ENCODE measurements at regions of chr19 and their contacts with region 1.

Region 1: GRCh38 chr19:11090054-11090900 is 1.0 kb downstream of the LDLR start:
- DNase-seq: peak; percentile 97
- H3K4me3 Mint-ChIP-seq: peak overlapping the region; percentile 98
- H3K27ac Mint-ChIP-seq: peak overlapping the region; percentile 99
- H3K4me1 Mint-ChIP-seq: peaks cover 45% of the 10 kb centered on the region
- H3K27me3 Mint-ChIP-seq: no peaks in the 10 kb centered on the region

Region 2: DNA sequence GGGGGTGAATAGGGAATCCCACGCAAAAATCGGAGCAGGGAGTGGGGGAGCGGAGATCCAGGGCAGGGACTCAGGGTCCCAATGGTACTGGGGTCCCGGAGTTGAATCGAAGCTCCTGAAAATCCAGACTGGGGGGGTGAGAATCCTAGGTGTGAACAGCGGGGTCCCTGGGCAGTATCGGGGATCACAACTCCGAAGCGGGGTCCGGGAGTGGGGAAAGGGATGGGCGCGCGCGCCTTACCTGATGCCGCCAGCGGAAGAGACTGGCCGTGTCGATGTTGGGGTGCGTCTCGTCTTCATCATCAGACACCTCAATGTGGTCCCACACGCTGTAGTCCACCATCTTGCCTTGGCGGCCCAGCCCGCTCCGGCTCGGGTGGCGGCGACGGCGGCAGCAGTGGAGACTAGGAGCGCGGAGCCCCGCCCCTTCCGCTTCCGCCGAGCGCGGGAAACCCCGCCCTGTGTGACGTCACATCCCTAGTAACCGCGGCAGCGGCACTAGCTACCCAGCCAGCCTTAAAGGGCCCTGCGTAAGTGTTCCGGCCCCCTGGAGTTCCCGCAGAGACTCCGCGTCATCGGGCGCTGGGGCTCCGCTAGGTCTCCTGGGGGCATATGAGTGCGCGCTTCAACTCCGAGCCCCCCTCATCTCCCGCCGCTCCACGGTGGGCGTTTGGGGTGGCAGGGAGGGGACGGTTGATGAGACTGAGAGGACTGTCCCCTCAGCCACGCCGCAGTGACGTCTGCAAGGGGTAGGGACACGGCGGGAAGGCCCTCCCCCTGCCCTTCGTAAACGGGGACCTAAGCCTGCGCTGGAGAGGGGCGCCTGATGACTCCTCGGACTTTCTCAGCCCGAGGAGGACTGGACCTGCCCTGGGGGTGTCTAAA is 686.9 kb before region 1 on chr19 and contains the start of gene CDC37:
- intact Hi-C with region 1: loop called (anchors 10 kb)
- DNase-seq: peak; percentile 98
- H3K4me3 Mint-ChIP-seq: peak within 1 kb of the TSS; percentile 94
- H3K27ac Mint-ChIP-seq: peak within 1 kb of the TSS; percentile 96
- H3K4me1 Mint-ChIP-seq: peaks cover 51% of the 10 kb centered on the region
- H3K27me3 Mint-ChIP-seq: no peaks in the 10 kb centered on the region
- total RNA-seq, gene CDC37: 320 and 326 TPM in 2 replicates

Region 3: GRCh38 chr19:10797541-10798256 is 292.6 kb before region 1 on chr19:
- intact Hi-C with region 1: loop called (anchors 1 kb)
- DNase-seq: peak; percentile 92
- H3K4me3 Mint-ChIP-seq: peak overlapping the region; percentile 89
- H3K27ac Mint-ChIP-seq: peak overlapping the region; percentile 99
- H3K4me1 Mint-ChIP-seq: peaks cover 58% of the 10 kb centered on the region
- H3K27me3 Mint-ChIP-seq: no peaks in the 10 kb centered on the region

Region 4: DNA sequence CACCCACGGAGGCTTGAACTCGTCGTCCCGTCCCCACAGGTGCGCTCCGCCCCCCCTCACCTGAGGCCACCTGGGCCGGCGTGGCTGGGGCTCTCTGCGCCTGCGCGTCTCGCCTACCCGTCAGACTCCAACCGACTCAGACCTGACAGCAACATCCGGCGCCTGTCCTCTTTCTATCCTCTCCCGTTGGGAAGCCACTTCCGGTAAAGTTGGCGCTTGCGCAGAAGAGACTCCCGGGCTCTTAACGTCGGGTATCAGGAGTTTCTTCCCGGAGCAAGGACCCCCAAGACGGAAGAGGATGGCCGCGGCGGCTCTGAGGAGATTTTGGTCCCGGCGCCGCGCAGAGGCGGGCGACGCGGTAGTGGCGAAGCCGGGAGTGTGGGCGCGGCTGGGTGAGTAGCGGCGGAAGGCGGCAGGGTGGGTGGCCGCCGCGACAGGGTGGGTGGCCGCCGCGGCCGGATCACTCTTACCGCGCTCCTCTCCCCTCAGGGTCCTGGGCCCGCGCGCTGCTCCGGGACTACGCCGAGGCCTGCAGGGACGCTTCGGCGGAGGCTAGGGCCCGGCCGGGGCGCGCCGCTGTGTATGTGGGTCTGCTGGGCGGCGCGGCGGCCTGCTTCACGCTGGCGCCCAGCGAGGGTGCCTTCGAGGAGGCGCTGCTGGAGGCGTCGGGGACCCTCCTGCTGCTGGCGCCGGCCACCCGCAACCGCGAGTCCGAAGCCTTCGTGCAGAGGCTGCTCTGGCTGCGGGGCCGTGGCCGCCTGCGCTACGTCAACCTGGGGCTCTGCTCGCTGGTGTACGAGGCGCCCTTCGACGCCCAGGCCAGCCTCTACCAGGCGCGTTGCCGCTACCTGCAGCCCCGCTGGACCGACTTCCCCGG is 161.5 kb before region 1 on chr19 and contains the starts of genes TIMM29 and YIPF2:
- intact Hi-C with region 1: loop called (anchors 2 kb)
- DNase-seq: peak; percentile 92
- H3K4me3 Mint-ChIP-seq: peak within 1 kb of the TSS; percentile 94
- H3K27ac Mint-ChIP-seq: peak within 1 kb of the TSS; percentile 85
- H3K4me1 Mint-ChIP-seq: peaks cover 11% of the 10 kb centered on the region
- H3K27me3 Mint-ChIP-seq: no peaks in the 10 kb centered on the region
- total RNA-seq, gene TIMM29: 22.6 and 22.7 TPM in 2 replicates
- total RNA-seq, gene YIPF2: 28.8 and 29.5 TPM in 2 replicates

Region 5: DNA sequence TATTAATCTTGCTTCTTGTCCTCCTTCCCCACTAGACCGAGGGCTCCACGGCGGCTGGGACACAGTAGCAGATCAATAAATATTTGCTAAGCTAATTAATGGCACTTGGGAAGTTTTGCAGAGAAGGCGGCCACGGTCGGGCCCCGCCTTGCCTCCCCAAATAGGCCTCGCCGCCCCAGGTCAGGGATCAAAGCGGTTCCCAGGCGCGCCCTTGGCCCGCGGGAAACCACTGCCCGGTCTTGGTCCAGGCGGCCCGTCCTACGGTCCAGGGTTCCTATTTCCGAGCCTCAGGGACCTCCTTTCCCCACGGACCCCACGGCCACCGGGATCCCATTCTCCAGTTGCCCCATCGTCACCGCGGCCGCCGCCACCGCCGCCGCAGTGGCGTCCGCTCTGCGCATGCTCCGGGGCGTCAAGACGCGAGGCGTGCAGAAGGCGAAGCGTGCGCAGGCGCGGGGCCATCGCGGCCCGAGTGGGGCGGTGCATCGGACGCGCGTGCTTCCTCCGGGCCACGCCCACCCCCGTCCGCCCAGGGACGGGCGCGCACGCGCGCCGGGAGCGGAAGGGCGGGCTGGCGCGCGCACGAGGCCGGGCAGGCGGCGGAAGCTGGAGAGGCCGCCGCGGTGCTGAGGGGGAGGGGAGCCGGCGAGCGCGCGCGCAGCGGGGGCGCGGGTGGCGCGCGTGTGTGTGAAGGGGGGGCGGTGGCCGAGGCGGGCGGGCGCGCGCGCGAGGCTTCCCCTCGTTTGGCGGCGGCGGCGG is 129.8 kb before region 1 on chr19 and contains the start of gene SMARCA4:
- intact Hi-C with region 1: loop called (anchors 2 kb)
- DNase-seq: peak; percentile 99
- H3K4me3 Mint-ChIP-seq: peak within 1 kb of the TSS; percentile 89
- H3K27ac Mint-ChIP-seq: peak within 1 kb of the TSS; percentile 87
- H3K4me1 Mint-ChIP-seq: peaks cover 39% of the 10 kb centered on the region
- H3K27me3 Mint-ChIP-seq: peaks cover under 1% of the 10 kb centered on the region
- total RNA-seq, gene SMARCA4: 177 and 178 TPM in 2 replicates

Region 6: GRCh38 chr19:11106477-11106876 is 16.2 kb after region 1 on chr19:
- intact Hi-C with region 1: no loop called
- DNase-seq: no peak
- H3K4me3 Mint-ChIP-seq: no peak overlapping the region
- H3K27ac Mint-ChIP-seq: no peak overlapping the region
- H3K4me1 Mint-ChIP-seq: no peaks in the 10 kb centered on the region
- H3K27me3 Mint-ChIP-seq: no peaks in the 10 kb centered on the region

Region 7: DNA sequence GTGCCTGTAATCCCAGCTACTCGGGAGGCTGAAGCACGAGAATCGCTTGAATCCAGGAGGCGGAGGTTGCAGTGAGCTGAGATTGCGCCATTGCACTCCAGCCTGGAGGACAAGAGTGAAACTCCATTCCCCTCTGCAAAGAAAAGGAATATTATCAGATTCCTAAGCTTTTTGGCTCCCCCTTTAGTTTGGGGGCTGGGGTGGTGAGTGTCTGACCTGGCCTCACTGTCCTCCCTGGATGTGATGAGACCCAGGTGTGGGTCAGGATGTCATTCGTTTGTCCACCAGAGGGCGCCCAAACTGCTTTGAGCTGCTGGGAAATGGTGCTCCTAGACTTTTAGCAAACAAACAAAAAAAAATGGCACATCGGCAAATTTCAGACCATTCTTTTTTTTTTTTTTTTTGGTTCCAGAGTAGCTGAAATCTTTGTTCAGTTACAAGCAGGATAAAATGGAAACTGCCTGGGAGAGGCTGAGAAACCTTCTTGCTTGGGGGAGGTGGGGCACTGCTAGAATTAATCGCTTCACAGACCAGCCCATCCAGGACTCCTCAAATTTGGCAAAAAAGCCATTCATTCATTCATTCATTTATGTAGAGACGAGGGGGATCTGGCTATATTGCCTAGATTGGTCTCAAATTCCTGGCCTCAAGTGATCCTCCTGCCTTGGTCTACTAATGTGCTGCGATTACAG is 35.9 kb after region 1 on chr19:
- intact Hi-C with region 1: no loop called
- DNase-seq: peak; percentile 62
- H3K4me3 Mint-ChIP-seq: no peak overlapping the region
- H3K27ac Mint-ChIP-seq: no peak overlapping the region
- H3K4me1 Mint-ChIP-seq: no peaks in the 10 kb centered on the region
- H3K27me3 Mint-ChIP-seq: no peaks in the 10 kb centered on the region

Region 8: DNA sequence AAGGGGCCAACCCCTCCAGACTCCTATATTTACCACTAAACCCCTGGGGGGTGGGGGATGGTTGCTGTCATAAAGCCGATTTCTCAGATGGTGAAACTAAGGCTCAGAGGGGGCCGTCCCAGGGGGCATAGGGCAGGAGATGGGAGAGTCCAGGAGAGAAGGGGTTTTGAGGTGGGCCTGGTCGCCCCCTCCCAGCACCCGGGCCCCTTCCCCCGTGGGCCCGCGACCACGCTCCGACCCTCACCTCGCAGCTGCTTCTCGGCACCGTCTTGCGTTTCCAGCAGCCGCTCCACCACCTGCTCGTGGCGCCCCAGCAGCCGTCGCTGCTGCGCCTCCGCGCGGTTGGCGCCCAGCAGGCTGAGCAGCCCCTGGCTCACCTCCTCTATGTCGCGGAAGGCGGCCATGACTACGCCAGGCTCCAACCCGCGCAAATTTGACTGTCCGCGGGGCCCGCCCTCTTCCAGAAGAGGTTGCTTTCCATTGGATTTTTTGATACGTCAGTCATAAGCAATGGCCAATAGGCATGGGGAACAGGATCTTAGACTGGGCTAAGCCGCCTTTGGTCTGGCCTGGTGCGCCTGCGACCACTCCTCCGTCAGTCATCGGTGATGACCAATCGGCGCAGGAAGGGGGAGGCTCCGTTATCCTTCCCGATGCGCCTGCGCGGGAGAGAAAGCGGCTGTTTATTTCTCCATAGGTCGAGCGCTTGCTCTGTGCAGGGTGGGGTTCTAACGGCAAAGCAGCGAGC is 65.3 kb after region 1 on chr19 and contains the start of gene SPC24:
- intact Hi-C with region 1: loop called (anchors 1 kb)
- DNase-seq: peak; percentile 94
- H3K4me3 Mint-ChIP-seq: peak within 1 kb of the TSS; percentile 84
- H3K27ac Mint-ChIP-seq: peak within 1 kb of the TSS; percentile 89
- H3K4me1 Mint-ChIP-seq: peaks cover 7% of the 10 kb centered on the region
- H3K27me3 Mint-ChIP-seq: no peaks in the 10 kb centered on the region
- total RNA-seq, gene SPC24: 30.3 and 30.4 TPM in 2 replicates

Region 9: DNA sequence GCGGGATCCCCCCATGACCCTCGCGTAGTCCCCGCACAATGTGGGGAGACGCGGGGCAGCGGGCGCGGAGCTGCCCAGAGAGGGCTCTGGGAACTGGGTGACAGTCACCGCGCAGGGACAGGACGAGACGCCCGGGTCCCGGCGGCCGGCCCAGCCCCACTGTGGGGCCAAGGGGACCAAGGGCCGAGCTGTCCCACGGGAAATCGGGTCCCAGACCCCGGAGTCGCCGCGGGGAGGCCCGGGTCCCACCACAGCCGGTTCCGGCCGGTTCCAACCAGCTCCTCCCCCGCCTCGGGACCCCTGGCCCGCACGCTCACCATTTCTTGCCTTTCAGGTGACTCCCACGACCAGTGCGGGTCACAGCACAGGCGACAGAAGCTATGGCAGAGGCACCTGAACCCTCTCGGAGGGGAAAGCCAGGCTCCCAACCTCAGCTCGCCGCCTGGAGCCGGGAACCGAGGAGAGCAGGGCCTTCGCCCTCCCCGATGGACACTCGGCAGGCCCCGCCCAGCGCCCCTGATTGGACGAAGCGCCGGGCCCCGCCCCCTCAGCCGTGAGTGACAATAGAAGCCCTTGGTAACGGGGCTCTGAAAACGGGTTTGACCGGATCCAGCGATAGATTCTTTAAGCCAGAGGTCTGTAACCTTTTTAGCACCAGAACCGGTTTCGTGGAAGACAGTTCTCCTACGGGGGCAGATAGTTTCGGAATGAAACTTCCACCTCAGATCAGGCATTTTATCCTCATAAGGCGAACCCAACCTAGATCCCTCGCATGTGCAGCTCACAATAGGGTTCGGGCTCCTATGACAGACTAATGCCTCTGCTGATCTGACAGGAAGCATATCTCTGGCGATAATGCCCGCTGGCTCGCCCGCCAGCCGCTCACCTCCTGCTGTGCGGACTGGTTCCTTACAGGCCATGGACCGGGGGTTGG is 945.2 kb after region 1 on chr19 and contains the start of gene ZNF433:
- intact Hi-C with region 1: no loop called
- DNase-seq: peak; percentile 12
- H3K4me3 Mint-ChIP-seq: peak within 1 kb of the TSS; percentile 79
- H3K27ac Mint-ChIP-seq: no peak within 1 kb of the TSS
- H3K4me1 Mint-ChIP-seq: no peaks in the 10 kb centered on the region
- H3K27me3 Mint-ChIP-seq: no peaks in the 10 kb centered on the region
- total RNA-seq, gene ZNF433: 0.39 TPM in 1 of 2 replicates, not detected in the other

Region 10: GRCh38 chr19:12789904-12790619 is 1699.8 kb after region 1 on chr19:
- intact Hi-C with region 1: loop called (anchors 5 kb)
- DNase-seq: peak; percentile 94
- H3K4me3 Mint-ChIP-seq: peak overlapping the region; percentile 97
- H3K27ac Mint-ChIP-seq: peak overlapping the region; percentile 91
- H3K4me1 Mint-ChIP-seq: peaks cover 30% of the 10 kb centered on the region
- H3K27me3 Mint-ChIP-seq: no peaks in the 10 kb centered on the region